ENCODE measurements at regions of chr2 and their contacts with region 1.

Region 1: DNA sequence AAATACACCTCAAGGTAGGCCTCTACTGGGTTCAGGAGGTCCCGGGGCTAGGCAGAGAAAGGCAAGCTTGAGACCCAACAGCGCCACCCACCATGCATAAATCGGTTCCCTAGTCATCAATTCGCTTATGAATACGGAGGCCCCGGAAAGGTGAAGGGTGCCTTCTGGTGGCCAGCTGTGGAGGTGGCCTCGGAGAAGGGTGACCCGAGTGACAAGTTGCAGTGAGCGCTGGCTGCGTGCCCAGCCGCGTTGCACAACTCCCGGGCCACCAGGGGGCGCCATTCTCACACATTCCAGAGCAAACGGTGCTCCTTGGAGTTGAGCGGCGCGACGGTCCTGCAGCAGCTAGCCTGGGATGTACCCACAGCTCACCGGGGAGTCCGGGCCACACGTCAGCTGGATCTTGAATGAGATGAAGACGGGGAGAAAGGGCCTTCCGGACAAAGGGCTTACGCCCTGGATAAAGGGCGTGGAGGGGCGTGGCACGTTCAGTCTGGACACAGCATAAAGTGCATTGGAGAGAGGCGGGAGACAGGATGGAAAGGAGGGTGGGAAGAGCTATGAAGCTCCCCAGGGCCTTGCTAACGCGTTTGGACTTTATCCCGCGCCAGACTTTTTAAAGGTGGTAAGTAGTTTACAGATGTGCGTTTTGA is 20.4 kb downstream of the TMSB10 start:
- DNase-seq: peak; percentile 91
- H3K4me3 ChIP-seq: peak overlapping the region; percentile 13 to 42 (median 34)
- H3K27ac ChIP-seq: peak overlapping the region; percentile 81
- H3K4me1 ChIP-seq: peaks cover 35% of the 10 kb centered on the region
- H3K27me3 ChIP-seq: no peaks in the 10 kb centered on the region
- CTCF ChIP-seq: peak; percentile 89 to 97

Region 2: GRCh38 chr2:84865181-84865783 is 60.6 kb before region 1 on chr2:
- CTCF ChIA-PET with region 1: no interaction called
- dilution Hi-C with region 1: no loop called
- in situ Hi-C with region 1: no loop called
- intact Hi-C with region 1: loop called (anchors 1 kb)
- DNase-seq: peak; percentile 34
- H3K4me3 ChIP-seq: no peak overlapping the region
- H3K27ac ChIP-seq: no peak overlapping the region
- H3K4me1 ChIP-seq: no peaks in the 10 kb centered on the region
- H3K27me3 ChIP-seq: no peaks in the 10 kb centered on the region
- CTCF ChIP-seq: peak; percentile 40 to 41

Region 3: DNA sequence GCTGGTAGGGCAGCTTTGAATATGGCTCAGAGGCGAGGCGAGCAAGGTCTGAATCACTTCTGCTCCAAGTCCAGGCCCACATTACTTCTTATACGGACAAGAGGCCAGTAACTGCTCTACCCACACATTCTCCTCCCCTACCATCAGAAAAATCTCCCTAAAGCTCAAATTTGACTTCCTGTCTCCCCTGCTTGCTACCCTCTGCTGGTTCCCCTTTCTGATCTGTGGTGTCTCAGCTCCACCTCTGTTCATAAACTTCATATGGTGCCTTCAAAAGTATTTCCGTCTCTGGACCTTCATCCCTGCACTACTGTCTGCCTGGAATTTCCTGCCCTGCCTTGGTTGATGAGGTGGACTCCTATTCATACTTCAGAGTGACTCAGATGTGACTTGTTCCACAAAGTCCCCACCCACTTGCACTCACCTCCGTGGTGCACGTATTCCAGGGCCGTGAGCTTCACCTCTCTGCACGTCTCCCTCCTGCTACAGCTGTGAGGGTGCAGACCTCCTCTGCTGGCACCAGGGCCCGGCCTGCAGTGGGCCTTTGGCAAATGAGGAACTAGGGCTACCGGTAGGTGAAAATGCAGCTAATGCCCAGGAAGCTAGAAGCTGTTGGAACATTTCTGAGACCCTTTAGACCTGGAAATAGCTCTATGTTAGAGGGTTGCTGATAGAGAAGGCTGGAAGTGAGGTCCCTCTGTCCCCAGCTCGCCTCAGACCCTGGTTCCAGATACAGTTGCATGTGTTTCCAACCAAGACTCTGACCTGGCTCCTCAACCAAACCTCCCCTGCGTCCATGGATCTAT is 20.6 kb after region 1 on chr2:
- CTCF ChIA-PET with region 1: interaction called, 6 read pairs
- dilution Hi-C with region 1: no loop called
- in situ Hi-C with region 1: no loop called
- intact Hi-C with region 1: loop called (anchors 2 kb)
- DNase-seq: peak; percentile 99
- H3K4me3 ChIP-seq: peak overlapping the region in 1 of 3 experiments; percentile 19
- H3K27ac ChIP-seq: peak overlapping the region; percentile 98
- H3K4me1 ChIP-seq: peaks cover 33% of the 10 kb centered on the region
- H3K27me3 ChIP-seq: no peaks in the 10 kb centered on the region
- CTCF ChIP-seq: no peak

Region 4: GRCh38 chr2:85017411-85018048 is 91.7 kb after region 1 on chr2:
- CTCF ChIA-PET with region 1: interaction called, 19 read pairs
- dilution Hi-C with region 1: no loop called
- in situ Hi-C with region 1: no loop called
- intact Hi-C with region 1: loop called (anchors 1 kb)
- DNase-seq: no peak
- H3K4me3 ChIP-seq: no peak overlapping the region
- H3K27ac ChIP-seq: peak overlapping the region; percentile 49
- H3K4me1 ChIP-seq: peaks cover 32% of the 10 kb centered on the region
- H3K27me3 ChIP-seq: no peaks in the 10 kb centered on the region
- CTCF ChIP-seq: peak; percentile 29 to 37

Region 5: GRCh38 chr2:85273738-85274731 is 348.2 kb after region 1 on chr2:
- CTCF ChIA-PET with region 1: no interaction called
- dilution Hi-C with region 1: loop called (anchors 5 kb)
- in situ Hi-C with region 1: loop called in 1 of 2 experiments (anchors 25 kb)
- intact Hi-C with region 1: no loop called
- DNase-seq: peak; percentile 96
- H3K4me3 ChIP-seq: no peak overlapping the region
- H3K27ac ChIP-seq: peak overlapping the region; percentile 23
- H3K4me1 ChIP-seq: peaks cover 49% of the 10 kb centered on the region
- H3K27me3 ChIP-seq: no peaks in the 10 kb centered on the region
- CTCF ChIP-seq: no peak

Measured in mammary epithelial cell (primary cell).